Head of caudate nucleus (tissue), 42 donors: ENCODE measurements at regions of chr16 and their contacts with region 1.

Region 1: DNA sequence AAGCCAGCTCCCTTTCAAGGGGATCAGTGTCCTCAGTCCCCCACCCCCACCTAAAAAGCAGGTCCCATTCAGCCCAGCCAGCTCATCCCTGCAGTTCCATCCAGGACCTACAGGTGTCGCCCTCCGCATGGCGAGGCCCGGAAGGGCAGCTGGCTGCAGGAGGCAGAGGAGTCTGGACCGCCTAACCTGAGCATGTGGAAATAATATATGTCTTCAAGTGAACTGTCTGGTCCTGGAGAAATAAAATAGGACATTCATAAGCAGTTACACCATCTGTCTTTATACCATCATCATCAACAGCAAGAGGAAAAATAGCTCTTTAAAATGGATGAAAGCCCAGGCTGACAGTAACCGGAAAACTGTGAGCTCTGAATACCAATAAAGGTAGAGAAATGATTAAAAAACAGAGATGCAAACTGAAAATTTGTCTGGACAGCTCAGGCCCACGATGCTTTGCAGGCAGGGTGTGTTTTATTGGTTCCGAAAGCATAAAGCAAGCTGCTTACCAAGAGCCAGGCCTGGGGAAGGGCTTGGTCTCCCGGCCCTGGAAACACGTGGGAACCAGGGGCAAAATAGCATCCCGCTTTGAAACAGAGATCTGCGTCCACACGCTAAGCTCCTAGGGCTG is 215.2 kb downstream of the ZFHX3 start:
- DNase-seq: peak in 41 of 42 donors; percentile 69 to 95 (median 85)

Region 2: DNA sequence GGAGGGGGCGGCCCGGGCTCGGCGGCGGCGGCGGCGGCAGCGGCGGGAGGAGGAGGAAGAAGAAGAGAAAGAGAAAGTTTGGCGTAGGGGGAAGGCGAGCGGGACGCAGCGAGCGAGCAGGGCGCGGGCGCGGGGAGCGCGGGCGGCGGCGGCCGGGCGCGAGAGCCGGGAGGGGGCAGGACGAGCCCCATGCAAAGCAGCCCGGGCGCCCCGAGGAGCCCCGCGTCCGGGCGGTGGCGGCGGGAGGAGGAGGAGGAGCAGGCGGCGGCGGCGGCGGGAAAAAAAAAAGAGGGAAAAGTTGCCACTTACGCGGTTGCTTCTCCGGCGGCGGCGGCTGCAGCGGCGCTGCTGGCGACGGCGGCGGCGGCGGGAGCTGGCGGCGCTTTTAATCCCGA is 225.5 kb after region 1 on chr16:
- intact Hi-C with region 1: loop called (anchors 10 kb)
- DNase-seq: peak in 24 of 42 donors; percentile 24 to 78 (median 56)

Region 3: GRCh38 chr16:73196670-73197069 is 363.9 kb after region 1 on chr16:
- intact Hi-C with region 1: loop called (anchors 10 kb)
- DNase-seq: peak; percentile 34 to 89 (median 68)